Activated CD4-positive, alpha-beta T cell treated with anti-CD3 and anti-CD28 coated beads for 36 hours (primary cell): ENCODE measurements at regions of chrX and their contacts with region 1.

Region 1: DNA sequence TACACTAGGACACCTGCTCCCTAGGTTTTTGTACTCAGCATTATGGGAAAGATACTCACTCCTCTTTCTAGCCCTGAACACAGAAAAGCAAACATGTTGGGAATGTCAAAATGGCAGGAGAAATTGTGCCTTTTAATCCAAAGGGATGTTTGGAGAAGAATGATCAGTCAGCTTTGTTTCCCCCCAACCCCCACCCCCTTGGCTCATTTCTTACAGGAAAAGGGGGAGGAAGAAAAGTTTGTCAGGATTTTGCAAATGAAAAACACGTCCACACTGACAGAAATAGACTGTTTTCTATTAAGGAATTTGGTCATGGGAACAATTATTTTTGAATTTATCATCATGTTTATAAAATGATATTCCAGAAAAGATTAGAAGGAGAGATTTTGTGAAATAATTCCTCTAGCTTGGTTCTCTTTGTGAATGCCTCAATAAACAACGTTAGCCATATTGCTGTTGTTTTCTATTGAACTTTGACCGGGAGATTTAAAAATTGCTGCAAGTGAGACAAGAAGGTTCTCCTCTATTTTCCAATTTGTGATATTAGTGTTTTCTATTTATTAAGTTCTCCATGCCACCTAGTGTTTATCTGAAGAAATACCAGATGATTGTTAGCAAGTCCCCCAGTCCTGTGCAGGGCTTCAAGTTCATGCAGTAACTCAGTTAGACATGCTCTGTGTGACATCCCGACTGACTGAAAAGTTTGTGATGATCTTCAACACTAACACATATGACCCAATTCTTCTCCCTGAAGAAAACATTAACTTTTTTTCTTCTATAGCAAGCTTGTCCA is 31.3 kb upstream of the TFDP3 start:
- DNase-seq: no peak
- ATAC-seq: no peak
- H3K4me3 Mint-ChIP-seq: no peak overlapping the region
- H3K27ac Mint-ChIP-seq: no peak overlapping the region
- H3K4me1 Mint-ChIP-seq: no peaks in the 10 kb centered on the region
- H3K27me3 Mint-ChIP-seq: peaks cover 2% of the 10 kb centered on the region

Region 2: DNA sequence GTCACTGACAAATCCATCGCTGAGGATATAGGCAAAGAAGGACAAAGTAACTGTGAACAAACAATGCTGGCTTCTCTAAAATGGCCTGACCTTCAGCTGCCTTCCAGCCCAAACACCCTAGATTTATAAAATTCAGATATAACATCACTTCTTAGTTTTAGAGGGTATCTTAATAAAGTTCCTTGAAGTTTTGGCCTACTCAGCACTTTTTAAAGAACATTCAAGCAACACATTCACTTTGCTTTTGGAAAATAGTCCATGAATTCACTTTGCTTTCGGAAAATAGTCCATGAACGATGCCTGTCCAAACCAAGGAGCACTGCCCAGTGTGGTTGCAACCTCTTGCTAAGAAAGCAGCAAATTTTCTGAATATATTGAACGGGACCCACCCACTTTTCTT is 23.7 kb after region 1 on chrX:
- CTCF ChIA-PET with region 1: no interaction called
- POLR2A ChIA-PET with region 1: no interaction called
- intact Hi-C with region 1: no loop called
- DNase-seq: no peak
- ATAC-seq: no peak
- H3K4me3 Mint-ChIP-seq: no peak overlapping the region
- H3K27ac Mint-ChIP-seq: no peak overlapping the region
- H3K4me1 Mint-ChIP-seq: no peaks in the 10 kb centered on the region
- H3K27me3 Mint-ChIP-seq: no peaks in the 10 kb centered on the region

Region 3: GRCh38 chrX:133297295-133297694 is 47.8 kb after region 1 on chrX:
- CTCF ChIA-PET with region 1: no interaction called
- POLR2A ChIA-PET with region 1: no interaction called
- intact Hi-C with region 1: loop called in 1 of 2 experiments (anchors 2 kb)
- DNase-seq: no peak
- ATAC-seq: no peak
- H3K4me3 Mint-ChIP-seq: no peak overlapping the region
- H3K27ac Mint-ChIP-seq: no peak overlapping the region
- H3K4me1 Mint-ChIP-seq: no peaks in the 10 kb centered on the region
- H3K27me3 Mint-ChIP-seq: no peaks in the 10 kb centered on the region